IMR-90 (cell line): ENCODE measurements at regions of chr5 and their contacts with region 1.

Region 1: GRCh38 chr5:74778609-74779008 is 11.6 kb downstream of the NSA2 start:
- DNase-seq: no peak
- ATAC-seq: no peak
- H3K4me3 ChIP-seq: no peak overlapping the region
- H3K27ac ChIP-seq: no peak overlapping the region
- H3K4me1 ChIP-seq: no peaks in the 10 kb centered on the region
- H3K27me3 ChIP-seq: no peaks in the 10 kb centered on the region
- CTCF ChIP-seq: no peak
- POLR2A ChIP-seq: no peak
- RAD21 ChIP-seq: no peak

Region 2: DNA sequence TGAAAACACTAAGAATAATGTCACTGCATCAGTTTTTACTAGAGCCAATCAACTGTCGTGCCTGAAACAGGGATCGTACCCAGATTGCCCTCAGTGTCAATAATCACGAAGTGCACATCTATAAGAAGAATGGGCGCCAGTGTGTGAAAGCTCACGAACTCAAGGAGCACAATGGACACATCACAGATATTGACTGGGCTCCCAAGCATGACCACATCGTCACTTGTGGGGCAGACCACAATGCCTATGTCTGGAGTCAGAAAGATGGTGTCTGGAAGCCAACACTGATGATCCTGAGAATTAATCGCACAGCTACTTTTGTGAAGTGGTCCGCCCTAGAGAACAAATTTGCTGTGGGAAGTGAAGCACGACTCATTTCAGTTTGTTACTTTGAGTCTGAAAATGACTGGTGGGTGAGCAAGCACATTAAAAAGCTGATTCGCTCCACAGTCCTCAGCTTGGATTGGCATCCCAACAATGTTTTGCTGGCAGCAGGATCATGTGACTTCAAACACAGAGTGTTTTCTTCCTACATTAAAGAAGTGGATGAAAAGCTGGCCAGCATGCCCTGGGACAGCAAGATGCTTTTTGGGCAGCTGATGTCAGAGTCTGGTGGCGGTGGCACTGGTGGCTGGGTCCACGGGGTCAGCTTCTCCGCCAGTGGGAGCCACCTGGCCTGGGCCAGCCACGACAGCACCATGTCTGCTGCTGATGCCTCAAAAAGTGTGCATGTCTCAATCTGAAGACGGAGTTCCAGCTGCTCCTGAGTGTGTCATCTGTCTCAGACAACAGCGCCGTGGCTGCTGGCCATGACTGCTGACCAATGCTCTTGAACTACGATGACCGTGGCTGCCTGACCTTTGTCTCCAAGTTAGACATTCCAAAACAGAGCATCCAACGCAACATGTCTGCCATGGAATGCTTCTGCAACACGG is 20.6 kb after region 1 on chr5:
- CTCF ChIA-PET with region 1: no interaction called
- POLR2A ChIA-PET with region 1: no interaction called
- dilution Hi-C with region 1: no loop called
- in situ Hi-C with region 1: no loop called
- intact Hi-C with region 1: loop called (anchors 1 kb)
- DNase-seq: peak; percentile 20
- ATAC-seq: no peak
- H3K4me3 ChIP-seq: no peak overlapping the region
- H3K27ac ChIP-seq: no peak overlapping the region
- H3K4me1 ChIP-seq: no peaks in the 10 kb centered on the region
- H3K27me3 ChIP-seq: no peaks in the 10 kb centered on the region
- CTCF ChIP-seq: no peak
- POLR2A ChIP-seq: no peak
- RAD21 ChIP-seq: no peak

Region 3: DNA sequence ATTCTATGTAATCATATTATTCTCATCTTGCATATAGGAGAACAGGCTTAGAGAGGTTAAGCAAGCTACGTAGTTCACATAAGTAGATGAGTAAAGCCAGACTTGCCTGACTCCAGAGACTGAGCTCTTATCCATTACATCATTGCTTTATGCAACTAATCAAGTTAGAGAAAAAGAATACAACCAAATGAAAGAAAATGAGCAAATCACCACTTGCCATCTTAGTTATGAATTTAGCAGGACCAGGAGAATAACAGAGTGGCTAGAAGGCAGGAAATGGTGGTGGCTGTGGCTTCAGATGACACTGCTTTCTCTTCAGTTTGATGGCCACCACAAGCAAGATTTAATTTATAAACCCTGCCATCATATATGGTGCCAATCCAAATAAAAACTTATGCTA is 912.1 kb after region 1 on chr5:
- CTCF ChIA-PET with region 1: no interaction called
- POLR2A ChIA-PET with region 1: no interaction called
- dilution Hi-C with region 1: no loop called
- in situ Hi-C with region 1: no loop called
- intact Hi-C with region 1: no loop called
- DNase-seq: peak; percentile 21
- ATAC-seq: peak; percentile 49
- H3K4me3 ChIP-seq: no peak overlapping the region
- H3K27ac ChIP-seq: no peak overlapping the region
- H3K4me1 ChIP-seq: peaks cover 1% of the 10 kb centered on the region; the same call in 1 of the 2 replicates
- H3K27me3 ChIP-seq: no peaks in the 10 kb centered on the region
- CTCF ChIP-seq: no peak
- POLR2A ChIP-seq: no peak
- RAD21 ChIP-seq: no peak